ENCODE measurements at regions of chr1 and their contacts with region 1.

Region 1: DNA sequence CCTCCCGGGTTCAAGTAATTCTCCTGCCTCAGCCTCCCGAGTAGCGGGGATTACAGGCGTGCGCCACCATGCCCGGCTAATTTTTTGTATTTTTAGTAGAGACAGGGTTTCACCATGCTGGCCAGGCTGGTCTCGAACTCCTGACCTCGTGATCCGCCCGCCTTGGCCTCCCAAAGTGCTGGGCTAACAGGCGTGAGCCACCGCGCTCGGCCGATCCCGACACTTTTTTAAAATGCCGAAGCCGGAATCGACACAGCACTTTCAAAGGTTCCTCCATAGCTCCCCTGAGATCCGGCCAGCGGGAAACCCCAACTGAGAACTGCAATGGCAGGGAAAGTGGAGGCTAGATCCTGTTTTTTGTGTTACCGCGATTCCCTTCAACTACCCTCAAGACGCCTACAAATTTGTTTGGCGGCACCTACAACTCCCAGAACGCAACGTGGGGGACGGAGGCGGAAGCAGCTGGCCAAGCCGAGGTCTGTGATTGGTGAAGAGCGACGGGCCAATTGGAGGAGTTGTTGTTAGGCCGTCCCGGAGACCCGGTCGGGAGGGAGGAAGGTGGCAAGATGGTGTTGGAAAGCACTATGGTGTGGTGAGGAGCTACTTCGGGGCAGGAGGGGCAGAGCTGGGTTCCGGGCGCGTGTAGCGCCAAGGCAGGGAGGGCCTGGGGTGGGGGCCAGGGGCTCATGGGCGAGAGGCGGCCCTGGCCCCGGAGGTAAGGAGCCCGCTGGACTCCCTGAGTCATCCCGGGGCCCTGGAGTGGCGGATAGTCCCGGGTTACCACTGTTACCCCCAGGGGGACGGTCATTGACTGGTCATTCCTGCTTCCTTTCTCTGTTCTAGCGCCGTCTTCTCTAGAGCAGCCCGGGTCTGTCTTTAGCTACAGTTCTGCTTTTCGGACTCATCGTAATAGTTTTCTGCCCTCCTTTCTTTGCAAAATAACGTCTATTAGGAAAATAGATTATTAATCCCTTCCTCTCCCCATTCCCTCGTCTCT is at the start of gene PSMD4:
- DNase-seq: peak; percentile 96
- ATAC-seq: peak; percentile 95
- H3K4me3 Mint-ChIP-seq: peak within 1 kb of the TSS; percentile 96
- H3K27ac Mint-ChIP-seq: peak within 1 kb of the TSS; percentile 96
- H3K4me1 Mint-ChIP-seq: peaks cover 27% of the 10 kb centered on the region
- H3K27me3 Mint-ChIP-seq: no peaks in the 10 kb centered on the region
- total RNA-seq, gene PSMD4: 187 to 243 TPM

Region 2: DNA sequence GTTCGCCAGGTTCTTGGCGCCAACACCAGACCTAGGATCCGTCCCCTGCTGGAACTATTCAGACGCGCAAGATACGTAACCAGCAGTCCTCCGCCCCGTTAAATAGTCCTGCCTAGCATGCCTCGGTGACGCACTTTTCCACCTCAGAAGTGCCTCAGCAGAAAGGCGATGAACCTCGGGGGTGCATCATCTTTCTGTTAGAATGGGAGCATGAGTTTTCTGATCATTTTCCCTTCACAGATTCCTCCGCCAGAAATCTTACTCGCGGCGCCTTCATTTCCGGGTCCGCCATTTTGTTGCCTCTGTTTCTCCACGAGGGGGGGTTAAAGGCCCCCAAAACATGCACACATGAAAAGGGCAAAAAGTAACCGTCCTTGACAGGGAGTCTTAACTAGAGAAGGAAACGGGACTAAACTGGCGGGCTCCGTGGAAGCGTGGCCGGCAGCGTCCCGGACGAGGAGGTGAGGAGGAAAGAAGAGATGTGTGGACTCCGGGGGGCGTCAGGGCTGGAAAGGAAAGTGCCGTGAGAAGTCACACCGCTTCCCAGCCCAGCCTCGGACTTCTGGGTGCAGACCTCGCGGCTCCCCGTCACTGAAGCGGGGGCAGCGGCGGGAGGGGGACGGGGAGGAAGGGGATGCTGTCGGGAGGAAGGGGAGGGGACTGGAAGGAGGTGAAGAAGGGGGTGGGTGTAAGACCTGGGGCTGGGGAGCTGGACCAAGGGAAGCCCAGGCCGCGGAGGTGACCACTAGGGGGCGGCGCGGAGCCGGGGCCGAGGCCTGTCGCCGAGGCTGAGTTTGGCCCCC is 183.8 kb before region 1 on chr1 and contains the start of gene GABPB2:
- CTCF ChIA-PET with region 1: no interaction called
- POLR2A ChIA-PET with region 1: no interaction called
- intact Hi-C with region 1: loop called in 1 of 2 experiments (anchors 1 kb)
- DNase-seq: peak; percentile 93
- ATAC-seq: peak; percentile 86
- H3K4me3 Mint-ChIP-seq: peak within 1 kb of the TSS; percentile 99
- H3K27ac Mint-ChIP-seq: peak within 1 kb of the TSS; percentile 100
- H3K4me1 Mint-ChIP-seq: peaks cover 18% of the 10 kb centered on the region
- H3K27me3 Mint-ChIP-seq: no peaks in the 10 kb centered on the region
- total RNA-seq, gene GABPB2: 16.6 to 19.2 TPM

Region 3: DNA sequence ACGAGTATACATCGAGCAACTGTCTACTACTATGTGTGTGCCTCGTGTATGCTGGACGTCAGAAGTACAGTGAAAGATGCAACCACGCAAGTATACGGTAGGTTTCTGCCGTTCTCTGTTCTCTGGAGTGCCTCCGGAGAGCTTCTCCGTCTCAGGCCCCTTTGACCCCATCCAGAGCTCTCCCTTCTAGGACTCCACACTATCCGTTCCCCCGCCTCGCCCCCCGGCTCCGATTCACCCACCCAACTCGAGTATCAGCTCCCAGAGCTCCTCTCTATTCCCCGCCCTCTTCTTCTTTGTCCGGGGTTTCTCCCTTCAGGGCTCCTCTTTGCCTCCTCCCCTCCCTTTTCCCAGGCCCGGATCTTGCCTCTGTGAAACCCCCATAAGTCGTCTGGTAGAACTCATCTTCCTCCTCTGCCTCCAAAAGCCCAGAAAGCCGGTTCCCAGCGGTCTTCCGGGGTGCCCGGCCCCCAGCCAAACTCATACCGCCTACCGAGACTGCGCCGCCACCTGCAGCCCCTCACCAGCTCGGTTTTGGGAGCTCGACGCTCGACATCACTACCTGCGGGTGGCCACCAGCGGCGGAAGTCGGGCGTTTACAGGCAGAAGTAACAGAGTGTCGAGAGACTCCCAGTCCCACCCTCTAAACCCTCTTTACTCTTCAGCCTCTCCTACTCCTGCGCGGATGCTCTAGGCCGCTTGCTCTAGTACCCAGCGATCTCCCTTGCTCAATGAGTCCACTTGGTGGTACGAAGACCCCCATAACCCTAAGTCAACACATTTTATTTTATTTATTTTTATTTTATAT is 64.7 kb before region 1 on chr1 and contains the start of gene VPS72:
- CTCF ChIA-PET with region 1: interaction called, 9 read pairs
- POLR2A ChIA-PET with region 1: interaction called, 10 read pairs
- intact Hi-C with region 1: loop called in 1 of 2 experiments (anchors 1 kb)
- DNase-seq: peak; percentile 93
- ATAC-seq: peak; percentile 96
- H3K4me3 Mint-ChIP-seq: peak within 1 kb of the TSS; percentile 96
- H3K27ac Mint-ChIP-seq: peak within 1 kb of the TSS; percentile 98
- H3K4me1 Mint-ChIP-seq: peaks cover 27% of the 10 kb centered on the region
- H3K27me3 Mint-ChIP-seq: no peaks in the 10 kb centered on the region
- total RNA-seq, gene VPS72: 77.1 to 77.8 TPM

Region 4: GRCh38 chr1:151227634-151228033 is 26.9 kb before region 1 on chr1:
- CTCF ChIA-PET with region 1: interaction called, 13 read pairs
- POLR2A ChIA-PET with region 1: interaction called, 4 read pairs
- intact Hi-C with region 1: no loop called
- DNase-seq: no peak
- ATAC-seq: no peak
- H3K4me3 Mint-ChIP-seq: no peak overlapping the region
- H3K27ac Mint-ChIP-seq: no peak overlapping the region
- H3K4me1 Mint-ChIP-seq: no peaks in the 10 kb centered on the region
- H3K27me3 Mint-ChIP-seq: no peaks in the 10 kb centered on the region

Region 5: GRCh38 chr1:151281969-151282882 is 27.7 kb after region 1 on chr1 and contains the start of gene ZNF687:
- CTCF ChIA-PET with region 1: interaction called, 14 read pairs
- POLR2A ChIA-PET with region 1: interaction called, 17 read pairs
- intact Hi-C with region 1: loop called (anchors 1 kb)
- DNase-seq: peak; percentile 99
- ATAC-seq: peak; percentile 93
- H3K4me3 Mint-ChIP-seq: peak within 1 kb of the TSS; percentile 81
- H3K27ac Mint-ChIP-seq: peak within 1 kb of the TSS; percentile 95
- H3K4me1 Mint-ChIP-seq: peaks cover 27% of the 10 kb centered on the region
- H3K27me3 Mint-ChIP-seq: no peaks in the 10 kb centered on the region
- total RNA-seq, gene ZNF687: 27.2 to 30.1 TPM

Region 6: DNA sequence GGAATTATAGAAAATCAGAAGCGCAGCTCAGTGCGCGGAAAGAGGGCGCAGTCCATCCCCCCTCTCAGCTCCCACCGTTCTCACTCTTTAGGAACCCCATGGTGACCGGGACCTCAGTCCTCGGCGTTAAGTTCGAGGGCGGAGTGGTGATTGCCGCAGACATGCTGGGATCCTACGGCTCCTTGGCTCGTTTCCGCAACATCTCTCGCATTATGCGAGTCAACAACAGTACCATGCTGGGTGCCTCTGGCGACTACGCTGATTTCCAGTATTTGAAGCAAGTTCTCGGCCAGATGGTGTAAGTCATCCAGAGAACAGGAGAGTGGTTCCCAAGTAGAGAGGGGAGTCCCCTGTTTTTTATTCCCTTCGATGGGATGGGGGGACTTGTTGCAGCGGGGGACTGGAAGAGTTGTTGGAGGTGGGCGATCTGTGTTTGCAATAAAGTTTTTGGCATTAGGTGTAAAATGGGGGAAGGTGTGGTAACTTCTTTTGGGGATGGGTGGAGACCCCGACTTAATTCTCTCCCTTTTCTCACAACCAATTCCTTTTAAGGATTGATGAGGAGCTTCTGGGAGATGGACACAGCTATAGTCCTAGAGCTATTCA is 145.5 kb after region 1 on chr1:
- CTCF ChIA-PET with region 1: no interaction called
- POLR2A ChIA-PET with region 1: interaction called, 3 read pairs
- intact Hi-C with region 1: loop called in 1 of 2 experiments (anchors 1 kb)
- DNase-seq: peak; percentile 43
- ATAC-seq: peak; percentile 21
- H3K4me3 Mint-ChIP-seq: peak overlapping the region; percentile 88
- H3K27ac Mint-ChIP-seq: peak overlapping the region; percentile 99
- H3K4me1 Mint-ChIP-seq: peaks cover 29% of the 10 kb centered on the region
- H3K27me3 Mint-ChIP-seq: no peaks in the 10 kb centered on the region

Measured in activated CD4-positive, alpha-beta T cell treated with anti-CD3 and anti-CD28 coated beads for 36 hours (primary cell).